ENCODE measurements at regions of chr22 and their contacts with region 1.

Region 1: DNA sequence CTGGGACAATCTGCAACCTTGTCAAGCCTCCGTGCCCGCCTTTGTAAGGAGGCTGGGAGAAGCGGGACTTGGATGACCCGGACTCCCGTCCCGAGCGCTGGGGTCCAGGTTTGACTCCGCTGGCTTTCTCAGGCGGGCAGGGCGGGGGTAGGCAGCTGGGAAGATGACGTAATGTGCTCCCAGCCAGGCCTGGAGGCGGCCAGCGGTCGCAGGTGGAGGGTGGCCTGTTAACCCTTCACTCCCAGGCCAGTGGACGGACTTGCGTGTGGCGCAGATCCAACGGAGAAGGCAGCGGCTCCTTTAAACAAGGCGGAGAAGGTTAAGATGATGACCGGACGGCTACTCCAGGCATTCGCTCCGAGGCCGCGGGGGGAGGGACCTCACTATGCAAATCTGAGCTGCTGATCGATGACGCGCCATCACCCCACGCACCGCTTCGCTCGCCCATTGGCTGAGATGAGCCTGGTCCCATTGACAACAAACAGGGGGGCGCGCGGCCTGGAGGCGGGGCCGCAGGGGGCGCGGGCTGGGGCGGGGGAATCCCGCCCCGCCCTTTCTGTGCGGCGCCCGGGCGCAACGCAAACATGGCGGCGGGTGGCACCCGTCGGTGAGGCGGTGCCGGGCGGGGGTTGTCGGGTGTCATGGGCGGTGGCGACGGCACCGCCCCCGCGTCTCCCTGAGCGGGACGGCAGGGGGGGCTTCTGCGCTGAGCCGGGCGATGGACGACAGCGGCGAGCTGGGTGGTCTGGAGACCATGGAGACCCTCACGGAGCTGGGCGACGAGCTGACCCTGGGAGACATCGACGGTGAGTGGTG is at the start of gene SREBF2:
- DNase-seq: peak; percentile 99
- H3K4me3 Mint-ChIP-seq: peak within 1 kb of the TSS; percentile 96
- H3K27ac Mint-ChIP-seq: peak within 1 kb of the TSS; percentile 98
- H3K4me1 Mint-ChIP-seq: peaks cover 51% of the 10 kb centered on the region
- H3K27me3 Mint-ChIP-seq: peaks cover 2% of the 10 kb centered on the region
- total RNA-seq, gene SREBF2: 235 and 245 TPM in 2 replicates

Region 2: GRCh38 chr22:41688365-41689211 is 144.2 kb before region 1 on chr22 and contains the start of gene SNU13:
- intact Hi-C with region 1: loop called (anchors 1 kb)
- DNase-seq: peak; percentile 92
- H3K4me3 Mint-ChIP-seq: peak within 1 kb of the TSS; percentile 98
- H3K27ac Mint-ChIP-seq: peak within 1 kb of the TSS; percentile 98
- H3K4me1 Mint-ChIP-seq: peaks cover 17% of the 10 kb centered on the region
- H3K27me3 Mint-ChIP-seq: no peaks in the 10 kb centered on the region
- total RNA-seq, gene SNU13: 337 and 339 TPM in 2 replicates

Region 3: DNA sequence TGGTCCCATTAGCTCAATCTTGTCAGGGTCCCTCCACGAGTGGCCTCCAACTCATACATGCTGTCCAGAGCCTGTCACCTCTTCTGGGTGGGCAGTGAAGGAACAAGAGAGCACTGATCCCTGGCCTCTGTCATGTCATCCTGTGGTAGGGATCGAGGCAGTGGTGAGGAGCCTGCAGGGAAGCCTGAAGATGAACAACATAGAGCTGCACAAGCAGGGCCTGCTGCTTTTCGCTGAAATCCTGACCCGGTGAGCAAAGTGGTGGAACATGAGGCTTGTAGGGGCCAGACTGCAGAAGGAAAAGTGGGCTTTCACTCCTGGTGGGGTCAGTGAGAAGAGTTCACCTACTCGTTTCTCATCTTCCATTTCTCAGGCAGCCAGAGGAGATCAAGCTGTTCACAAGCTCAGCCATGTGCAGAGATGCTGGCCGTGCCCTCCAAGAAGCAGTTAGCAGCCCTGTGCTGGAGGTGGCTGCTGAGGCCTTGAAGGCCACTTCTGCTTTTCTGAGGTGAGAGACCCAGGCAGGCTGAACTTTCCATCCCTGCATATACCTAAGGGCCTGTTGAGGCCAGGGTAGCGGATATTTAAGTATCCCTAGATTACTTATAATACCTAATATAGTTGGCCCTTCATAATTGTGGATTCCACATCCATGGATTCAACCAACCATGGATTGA is 100.5 kb before region 1 on chr22:
- intact Hi-C with region 1: no loop called
- DNase-seq: no peak
- H3K4me3 Mint-ChIP-seq: no peak overlapping the region
- H3K27ac Mint-ChIP-seq: no peak overlapping the region
- H3K4me1 Mint-ChIP-seq: no peaks in the 10 kb centered on the region
- H3K27me3 Mint-ChIP-seq: no peaks in the 10 kb centered on the region

Region 4: GRCh38 chr22:41800348-41801146 is 32.2 kb before region 1 on chr22 and contains the start of gene CCDC134:
- intact Hi-C with region 1: loop called (anchors 2 kb)
- DNase-seq: peak; percentile 90
- H3K4me3 Mint-ChIP-seq: peak within 1 kb of the TSS; percentile 99
- H3K27ac Mint-ChIP-seq: peak within 1 kb of the TSS; percentile 98
- H3K4me1 Mint-ChIP-seq: peaks cover 35% of the 10 kb centered on the region
- H3K27me3 Mint-ChIP-seq: no peaks in the 10 kb centered on the region
- total RNA-seq, gene CCDC134: 18.0 and 19.6 TPM in 2 replicates

Region 5: GRCh38 chr22:41842996-41843970 is 10.5 kb after region 1 on chr22:
- intact Hi-C with region 1: loop called (anchors 1 kb)
- DNase-seq: no peak
- H3K4me3 Mint-ChIP-seq: peak overlapping the region; percentile 24
- H3K27ac Mint-ChIP-seq: peak overlapping the region; percentile 75
- H3K4me1 Mint-ChIP-seq: peaks cover 84% of the 10 kb centered on the region
- H3K27me3 Mint-ChIP-seq: no peaks in the 10 kb centered on the region

Region 6: DNA sequence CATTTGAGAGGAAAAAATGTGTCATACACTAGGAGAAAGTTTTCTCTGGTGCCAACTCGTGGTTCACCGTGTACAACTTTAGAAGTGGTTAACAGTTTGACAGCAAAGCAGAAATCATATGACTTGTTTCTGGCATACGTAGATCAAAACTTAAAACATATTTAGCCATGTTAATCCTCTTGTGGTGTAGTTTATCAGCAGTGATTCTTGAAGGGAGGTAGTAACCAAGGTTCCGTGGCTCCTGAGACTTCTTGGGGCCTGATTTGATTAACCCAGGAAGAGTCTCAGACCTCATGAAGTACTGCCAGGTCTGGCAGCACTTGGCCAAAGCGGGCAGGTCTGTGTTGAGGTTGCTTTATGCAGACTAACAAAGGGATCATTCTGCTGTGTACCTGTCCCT is 40.6 kb after region 1 on chr22:
- intact Hi-C with region 1: loop called (anchors 1 kb)
- DNase-seq: peak; percentile 10
- H3K4me3 Mint-ChIP-seq: peak overlapping the region; percentile 76
- H3K27ac Mint-ChIP-seq: peak overlapping the region; percentile 82
- H3K4me1 Mint-ChIP-seq: peaks cover 67% of the 10 kb centered on the region
- H3K27me3 Mint-ChIP-seq: no peaks in the 10 kb centered on the region

Region 7: GRCh38 chr22:42070517-42071422 is 238.0 kb after region 1 on chr22 and contains the start of gene NAGA:
- intact Hi-C with region 1: loop called (anchors 2 kb)
- DNase-seq: peak; percentile 91
- H3K4me3 Mint-ChIP-seq: peak within 1 kb of the TSS; percentile 92
- H3K27ac Mint-ChIP-seq: peak within 1 kb of the TSS; percentile 94
- H3K4me1 Mint-ChIP-seq: peaks cover 53% of the 10 kb centered on the region
- H3K27me3 Mint-ChIP-seq: peaks cover 2% of the 10 kb centered on the region
- total RNA-seq, gene NAGA: 30.5 and 30.9 TPM in 2 replicates